CD4-positive, alpha-beta T cell (primary cell): ENCODE measurements at regions of chr5 and their contacts with region 1.

Region 1: GRCh38 chr5:50727149-50727496 is 60.7 kb downstream of the PARP8 start:
- DNase-seq: peak in 4 of 14 experiments; percentile 27 to 47 (median 36)
- ATAC-seq: peak; percentile 60
- H3K4me3 ChIP-seq: no peak overlapping the region
- H3K4me3 Mint-ChIP-seq: peak overlapping the region; percentile 52
- H3K27ac ChIP-seq: peak overlapping the region in 1 of 2 donors; percentile 14
- H3K27ac Mint-ChIP-seq: peak overlapping the region; percentile 70
- H3K4me1 ChIP-seq: peaks cover 17% of the 10 kb centered on the region
- H3K4me1 Mint-ChIP-seq: peaks cover 79% of the 10 kb centered on the region
- H3K27me3 ChIP-seq: no peaks in the 10 kb centered on the region
- H3K27me3 Mint-ChIP-seq: no peaks in the 10 kb centered on the region
- CTCF ChIP-seq: no peak

Region 2: DNA sequence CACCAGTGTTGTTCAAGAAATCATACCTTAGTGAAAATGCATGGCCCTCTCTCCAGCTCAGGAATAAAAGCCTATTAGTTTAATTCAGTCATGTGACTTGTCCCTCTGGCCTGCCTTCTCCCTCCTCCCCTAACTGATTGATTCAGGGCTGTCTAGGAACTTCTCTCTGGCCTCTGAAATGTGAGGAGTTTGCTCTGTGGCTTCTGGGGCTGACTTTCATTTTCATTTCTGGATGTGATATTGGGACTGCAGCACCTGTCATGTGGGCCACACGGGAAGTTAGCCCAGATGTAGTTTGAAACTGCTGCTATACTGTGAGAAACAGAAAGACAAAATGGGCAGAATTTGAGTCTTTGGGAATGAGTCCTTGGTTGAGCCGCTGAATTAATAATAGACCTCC is 15.8 kb before region 1 on chr5:
- CTCF ChIA-PET with region 1: interaction called, 4 read pairs
- POLR2A ChIA-PET with region 1: interaction called, 5 read pairs
- intact Hi-C with region 1: loop called in 1 of 2 experiments (anchors 2 kb)
- DNase-seq: peak; percentile 21 to 90 (median 39)
- ATAC-seq: peak; percentile 93
- H3K4me3 ChIP-seq: peak overlapping the region; percentile 34
- H3K4me3 Mint-ChIP-seq: peak overlapping the region; percentile 85
- H3K27ac ChIP-seq: peak overlapping the region; percentile 71 to 74
- H3K27ac Mint-ChIP-seq: peak overlapping the region; percentile 92
- H3K4me1 ChIP-seq: peaks cover 31% of the 10 kb centered on the region
- H3K4me1 Mint-ChIP-seq: peaks cover 91% of the 10 kb centered on the region
- H3K27me3 ChIP-seq: no peaks in the 10 kb centered on the region
- H3K27me3 Mint-ChIP-seq: no peaks in the 10 kb centered on the region
- CTCF ChIP-seq: no peak